ENCODE measurements at regions of chr16 and their contacts with region 1.

Region 1: GRCh38 chr16:14449790-14450480 is 180.1 kb downstream of the PARN start:
- DNase-seq: no peak
- H3K4me3 ChIP-seq: no peak overlapping the region
- H3K27ac ChIP-seq: no peak overlapping the region
- H3K4me1 ChIP-seq: peaks cover 10% of the 10 kb centered on the region
- H3K27me3 ChIP-seq: no peaks in the 10 kb centered on the region
- CTCF ChIP-seq: no peak
- POLR2A ChIP-seq: no peak

Region 2: GRCh38 chr16:14389359-14389758 is 60.6 kb before region 1 on chr16:
- intact Hi-C with region 1: no loop called
- DNase-seq: no peak
- H3K4me3 ChIP-seq: no peak overlapping the region
- H3K27ac ChIP-seq: no peak overlapping the region
- H3K4me1 ChIP-seq: no peaks in the 10 kb centered on the region
- H3K27me3 ChIP-seq: no peaks in the 10 kb centered on the region
- CTCF ChIP-seq: no peak
- POLR2A ChIP-seq: no peak

Region 3: DNA sequence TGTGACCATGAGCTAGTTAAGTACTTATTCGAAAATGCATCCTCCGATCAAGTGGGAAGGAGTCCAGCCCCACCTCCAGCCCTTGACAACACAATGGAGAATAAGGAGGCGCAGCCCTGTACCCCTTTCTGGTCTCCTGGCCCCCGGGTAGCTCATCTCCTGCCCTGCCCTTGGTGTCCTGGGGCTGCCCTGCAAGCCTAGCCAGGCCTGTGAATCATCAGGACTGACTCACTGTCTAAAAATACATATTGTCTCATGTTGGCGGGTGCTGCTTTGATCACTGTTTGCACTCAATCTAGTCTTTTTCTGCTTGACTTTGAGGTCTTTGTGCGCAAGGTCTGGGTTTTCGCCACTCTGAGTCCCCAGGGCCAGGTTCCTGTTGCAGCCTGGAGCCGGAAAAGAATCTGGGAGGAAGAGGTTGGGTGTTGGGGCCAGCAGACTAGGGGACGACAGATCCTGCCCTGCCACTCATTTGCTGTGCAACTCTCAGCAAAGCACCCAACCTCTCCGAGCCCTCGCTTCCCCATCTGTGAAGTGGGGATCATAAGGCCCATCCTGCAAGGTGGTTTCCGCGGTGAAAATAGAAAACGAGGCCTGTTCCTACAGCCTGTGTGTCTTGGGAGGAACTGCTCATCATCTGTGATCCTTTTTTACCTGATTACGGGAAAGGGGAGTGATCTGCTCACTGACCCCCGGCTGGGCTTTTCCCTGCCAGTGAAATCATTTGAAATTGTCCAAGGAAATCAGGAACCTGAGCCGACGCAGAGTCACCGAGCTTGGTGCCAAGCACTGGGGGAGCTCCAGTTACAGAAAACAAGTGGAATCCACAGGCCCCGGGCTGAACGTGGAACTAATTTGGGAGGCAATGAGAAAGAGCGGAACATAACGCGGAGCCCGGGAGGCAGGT is 50.3 kb before region 1 on chr16:
- intact Hi-C with region 1: no loop called
- DNase-seq: no peak
- H3K4me3 ChIP-seq: no peak overlapping the region
- H3K27ac ChIP-seq: peak overlapping the region; percentile 76
- H3K4me1 ChIP-seq: peaks cover 22% of the 10 kb centered on the region
- H3K27me3 ChIP-seq: no peaks in the 10 kb centered on the region
- CTCF ChIP-seq: no peak
- POLR2A ChIP-seq: no peak

Region 4: GRCh38 chr16:14427371-14427948 is 22.5 kb before region 1 on chr16:
- intact Hi-C with region 1: loop called (anchors 2 kb)
- DNase-seq: no peak
- H3K4me3 ChIP-seq: no peak overlapping the region
- H3K27ac ChIP-seq: no peak overlapping the region
- H3K4me1 ChIP-seq: no peaks in the 10 kb centered on the region
- H3K27me3 ChIP-seq: no peaks in the 10 kb centered on the region
- CTCF ChIP-seq: no peak
- POLR2A ChIP-seq: no peak

Region 5: DNA sequence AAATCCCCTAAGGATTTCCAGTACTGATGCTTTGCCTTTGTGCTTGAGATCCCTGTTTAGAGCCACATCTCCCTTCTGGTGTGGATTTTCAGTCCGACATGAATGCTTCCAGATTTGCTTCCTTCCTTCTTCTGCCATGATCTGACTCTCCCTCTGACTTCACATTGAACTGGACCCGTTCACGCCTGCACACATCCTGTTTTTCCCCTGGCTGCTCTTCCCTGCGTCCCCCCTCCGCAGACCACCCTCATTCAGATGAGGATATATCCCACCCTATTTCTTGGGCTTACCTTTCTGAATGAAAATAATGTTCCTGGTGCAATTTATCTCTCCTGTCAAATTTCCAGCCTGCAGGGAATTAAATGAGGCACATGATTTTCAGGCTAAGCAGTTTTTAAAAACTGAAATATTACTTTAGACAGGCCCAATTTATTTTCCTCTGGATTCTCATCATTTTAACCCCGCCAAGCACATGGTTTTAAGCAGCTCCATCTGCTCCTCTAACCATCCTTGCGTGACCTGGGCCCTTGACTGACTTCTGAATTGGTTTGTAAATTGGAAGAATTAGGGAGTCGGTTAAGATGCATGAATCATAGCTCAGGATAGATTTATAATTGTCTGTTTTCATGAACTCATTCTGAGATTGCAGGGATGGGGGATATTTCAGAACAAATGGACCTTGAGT is 1043.7 kb after region 1 on chr16:
- intact Hi-C with region 1: no loop called
- DNase-seq: no peak
- H3K4me3 ChIP-seq: no peak overlapping the region
- H3K27ac ChIP-seq: peak overlapping the region; percentile 79
- H3K4me1 ChIP-seq: peaks cover 32% of the 10 kb centered on the region
- H3K27me3 ChIP-seq: no peaks in the 10 kb centered on the region
- CTCF ChIP-seq: no peak
- POLR2A ChIP-seq: no peak